Activated CD4-positive, alpha-beta T cell treated with anti-CD3 and anti-CD28 coated beads for 36 hours (primary cell): ENCODE measurements at regions of chr1 and their contacts with region 1.

Region 1: GRCh38 chr1:99849744-99850458 is at the start of gene AGL:
- DNase-seq: peak; percentile 93
- ATAC-seq: peak; percentile 97
- H3K4me3 Mint-ChIP-seq: peak within 1 kb of the TSS; percentile 94
- H3K27ac Mint-ChIP-seq: peak within 1 kb of the TSS; percentile 96
- H3K4me1 Mint-ChIP-seq: peaks cover 35% of the 10 kb centered on the region
- H3K27me3 Mint-ChIP-seq: no peaks in the 10 kb centered on the region
- total RNA-seq, gene AGL: 14.6 to 18.3 TPM

Region 2: DNA sequence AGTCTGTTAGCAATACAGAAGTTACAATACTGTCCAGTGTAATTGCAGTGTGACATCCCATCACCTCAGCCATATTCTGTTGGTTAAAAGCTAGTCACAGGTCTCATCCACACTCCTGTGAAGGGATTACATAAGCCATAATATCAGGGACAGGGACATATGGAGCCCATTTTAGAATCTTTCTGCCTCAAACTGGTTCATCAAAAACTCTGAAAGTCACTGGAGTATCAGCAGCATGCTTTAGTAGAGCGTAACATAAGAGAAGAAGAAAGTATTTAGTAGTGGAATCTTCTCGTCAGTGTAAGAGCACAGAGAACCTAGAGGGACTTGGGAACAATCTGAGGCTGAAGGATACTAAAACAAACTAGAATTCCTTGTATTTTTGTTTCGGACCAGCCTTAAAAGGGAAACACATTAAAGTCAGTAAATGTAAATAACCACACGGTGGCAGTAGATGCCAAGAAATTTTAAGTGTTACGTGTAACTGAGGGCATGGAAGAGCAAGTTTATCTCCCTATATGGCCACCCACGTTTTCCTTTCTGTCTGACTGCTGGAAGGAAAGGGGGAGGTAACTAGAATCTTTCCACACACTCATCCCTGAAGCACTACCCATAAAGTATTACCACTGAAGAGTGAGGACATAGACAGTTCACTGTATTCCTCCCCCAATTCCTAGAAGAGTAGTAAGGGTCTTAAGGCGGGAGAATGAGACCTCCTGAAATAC is 41.3 kb before region 1 on chr1:
- CTCF ChIA-PET with region 1: no interaction called
- POLR2A ChIA-PET with region 1: no interaction called
- intact Hi-C with region 1: loop called (anchors 1 to 2 kb)
- DNase-seq: peak; percentile 47
- ATAC-seq: peak; percentile 93
- H3K4me3 Mint-ChIP-seq: no peak overlapping the region
- H3K27ac Mint-ChIP-seq: peak overlapping the region; percentile 75
- H3K4me1 Mint-ChIP-seq: peaks cover 11% of the 10 kb centered on the region
- H3K27me3 Mint-ChIP-seq: peaks cover 9% of the 10 kb centered on the region

Region 3: GRCh38 chr1:99969729-99970621 is 120.1 kb after region 1 on chr1 and contains the start of gene SLC35A3:
- CTCF ChIA-PET with region 1: no interaction called
- POLR2A ChIA-PET with region 1: no interaction called
- intact Hi-C with region 1: loop called in 1 of 2 experiments (anchors 1 kb)
- DNase-seq: peak; percentile 89
- ATAC-seq: peak; percentile 89
- H3K4me3 Mint-ChIP-seq: peak within 1 kb of the TSS; percentile 100
- H3K27ac Mint-ChIP-seq: peak within 1 kb of the TSS; percentile 94
- H3K4me1 Mint-ChIP-seq: peaks cover 26% of the 10 kb centered on the region
- H3K27me3 Mint-ChIP-seq: no peaks in the 10 kb centered on the region
- total RNA-seq, gene SLC35A3: 11.2 to 13.4 TPM

Region 4: GRCh38 chr1:100122177-100122576 is 272.3 kb after region 1 on chr1:
- CTCF ChIA-PET with region 1: no interaction called
- POLR2A ChIA-PET with region 1: no interaction called
- intact Hi-C with region 1: no loop called
- DNase-seq: no peak
- ATAC-seq: no peak
- H3K4me3 Mint-ChIP-seq: no peak overlapping the region
- H3K27ac Mint-ChIP-seq: no peak overlapping the region
- H3K4me1 Mint-ChIP-seq: no peaks in the 10 kb centered on the region
- H3K27me3 Mint-ChIP-seq: no peaks in the 10 kb centered on the region

Region 5: GRCh38 chr1:100132566-100133477 is 282.9 kb after region 1 on chr1 and contains the starts of genes SASS6 and TRMT13:
- CTCF ChIA-PET with region 1: no interaction called
- POLR2A ChIA-PET with region 1: no interaction called
- intact Hi-C with region 1: loop called (anchors 1 to 5 kb)
- DNase-seq: peak; percentile 97
- ATAC-seq: peak; percentile 94
- H3K4me3 Mint-ChIP-seq: peak within 1 kb of the TSS; percentile 98
- H3K27ac Mint-ChIP-seq: peak within 1 kb of the TSS; percentile 98
- H3K4me1 Mint-ChIP-seq: peaks cover 32% of the 10 kb centered on the region
- H3K27me3 Mint-ChIP-seq: no peaks in the 10 kb centered on the region
- total RNA-seq, gene SASS6: 14.2 to 17.4 TPM
- total RNA-seq, gene TRMT13: 19.0 to 20.2 TPM

Region 6: GRCh38 chr1:100249537-100250257 is 399.8 kb after region 1 on chr1 and contains the start of gene DBT:
- CTCF ChIA-PET with region 1: no interaction called
- POLR2A ChIA-PET with region 1: no interaction called
- intact Hi-C with region 1: loop called in 1 of 2 experiments (anchors 2 kb)
- DNase-seq: peak; percentile 96
- ATAC-seq: peak; percentile 100
- H3K4me3 Mint-ChIP-seq: no peak within 1 kb of the TSS
- H3K27ac Mint-ChIP-seq: no peak within 1 kb of the TSS
- H3K4me1 Mint-ChIP-seq: peaks cover 16% of the 10 kb centered on the region
- H3K27me3 Mint-ChIP-seq: no peaks in the 10 kb centered on the region
- total RNA-seq, gene DBT: 11.0 to 12.8 TPM

Region 7: DNA sequence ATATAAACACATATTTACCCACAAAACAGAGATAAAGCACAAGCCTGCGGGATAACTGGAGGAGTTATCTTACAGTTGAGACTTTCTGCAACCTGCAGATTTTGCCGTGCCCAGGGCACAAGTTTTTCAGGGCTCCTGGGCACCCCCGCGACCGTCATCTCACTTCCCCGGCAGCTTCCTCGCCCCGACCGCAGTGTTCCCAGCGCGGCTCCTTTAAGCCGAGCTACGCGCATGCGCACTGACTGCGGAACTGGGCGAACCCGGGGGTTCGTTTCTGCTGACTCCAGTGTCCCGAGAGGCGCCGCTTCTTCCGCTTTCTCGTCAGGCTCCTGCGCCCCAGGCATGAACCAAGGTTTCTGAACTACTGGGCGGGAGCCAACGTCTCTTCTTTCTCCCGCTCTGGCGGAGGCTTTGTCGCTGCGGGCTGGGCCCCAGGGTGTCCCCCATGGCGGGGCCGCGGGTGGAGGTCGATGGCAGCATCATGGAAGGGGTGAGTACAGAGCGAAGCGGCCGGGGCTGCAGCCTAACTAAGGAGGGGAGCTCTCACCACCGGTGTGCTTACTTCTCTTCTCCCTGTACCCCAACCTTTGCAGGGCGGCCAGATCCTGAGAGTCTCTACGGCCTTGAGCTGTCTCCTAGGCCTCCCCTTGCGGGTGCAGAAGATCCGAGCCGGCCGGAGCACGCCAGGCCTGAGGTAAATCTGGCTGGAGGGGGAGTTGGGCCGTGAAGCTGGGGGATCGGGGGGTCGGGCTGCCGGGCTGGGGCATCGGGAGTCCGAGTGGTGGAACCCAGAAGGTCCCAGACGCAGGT is 416.2 kb after region 1 on chr1 and contains the start of gene RTCA:
- CTCF ChIA-PET with region 1: no interaction called
- POLR2A ChIA-PET with region 1: no interaction called
- intact Hi-C with region 1: loop called in 1 of 2 experiments (anchors 5 kb)
- DNase-seq: peak; percentile 97
- ATAC-seq: peak; percentile 93
- H3K4me3 Mint-ChIP-seq: peak within 1 kb of the TSS; percentile 100
- H3K27ac Mint-ChIP-seq: peak within 1 kb of the TSS; percentile 99
- H3K4me1 Mint-ChIP-seq: peaks cover 32% of the 10 kb centered on the region
- H3K27me3 Mint-ChIP-seq: no peaks in the 10 kb centered on the region
- total RNA-seq, gene RTCA: 47.8 to 53.0 TPM